ENCODE measurements at regions of chr2 and their contacts with region 1.

Region 1: GRCh38 chr2:177263451-177264208 is 897 bp downstream of the NFE2L2 start:
- DNase-seq: peak; percentile 99
- H3K4me3 ChIP-seq: peak overlapping the region; percentile 70 to 99
- H3K27ac ChIP-seq: peak overlapping the region; percentile 99 to 100
- H3K4me1 ChIP-seq: peaks cover 0 to 53% (median 30%) of the 10 kb centered on the region in 4 donors
- H3K27me3 ChIP-seq: no peaks in the 10 kb centered on the region
- CTCF ChIP-seq: peak; percentile 89 to 91

Region 2: DNA sequence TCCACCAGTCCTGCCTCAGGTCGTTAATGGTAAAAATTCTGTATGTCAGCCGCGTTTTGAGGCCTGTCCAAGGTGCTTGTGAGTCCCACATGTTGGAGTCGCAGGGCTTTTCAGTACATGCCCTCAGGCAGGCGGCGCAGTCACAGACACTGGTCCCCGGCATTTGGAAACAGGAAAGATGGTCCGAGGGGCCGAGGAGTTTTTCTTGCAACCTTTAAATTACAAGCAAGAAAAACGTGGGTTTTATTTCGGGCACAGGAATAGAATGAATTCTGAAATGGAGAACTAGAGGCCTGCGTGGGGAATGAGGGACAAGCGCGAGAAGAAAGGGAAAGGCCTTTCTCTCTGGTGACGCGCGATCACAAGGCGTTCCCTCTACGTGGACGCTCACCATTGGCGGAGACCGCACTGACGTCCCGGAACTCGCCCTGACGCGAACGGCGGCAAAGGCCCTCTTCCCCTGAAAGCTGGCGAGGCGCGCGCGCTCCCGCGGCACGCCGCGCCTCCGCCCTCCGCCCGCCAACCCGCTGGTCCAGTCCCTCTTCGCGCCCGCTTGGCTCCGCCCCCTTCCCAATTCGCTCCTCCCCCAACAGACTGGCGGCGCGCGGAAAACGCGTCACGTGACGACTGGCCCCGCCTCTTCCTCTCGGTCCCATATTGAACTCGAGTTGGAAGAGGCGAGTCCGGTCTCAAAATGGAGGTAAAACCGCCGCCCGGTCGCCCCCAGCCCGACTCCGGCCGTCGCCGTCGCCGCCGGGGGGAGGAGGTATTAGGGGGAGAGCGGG is 51.3 kb before region 1 on chr2 and contains the start of gene HNRNPA3:
- intact Hi-C with region 1: loop called (anchors 2 kb)
- DNase-seq: peak; percentile 98 to 100
- H3K4me3 ChIP-seq: peak within 1 kb of the TSS; percentile 76 to 90
- H3K27ac ChIP-seq: peak within 1 kb of the TSS; percentile 97 to 98
- H3K4me1 ChIP-seq: peaks cover 0 to 45% (median 32%) of the 10 kb centered on the region in 4 donors
- H3K27me3 ChIP-seq: no peaks in the 10 kb centered on the region
- CTCF ChIP-seq: peak in 1 of 2 experiments; percentile 24

Region 3: GRCh38 chr2:177717831-177718618 is 454.4 kb after region 1 on chr2:
- intact Hi-C with region 1: no loop called
- DNase-seq: no peak
- H3K4me3 ChIP-seq: no peak overlapping the region
- H3K27ac ChIP-seq: no peak overlapping the region
- H3K4me1 ChIP-seq: no peaks in the 10 kb centered on the region
- H3K27me3 ChIP-seq: no peaks in the 10 kb centered on the region
- CTCF ChIP-seq: no peak

Measured in tibial artery (tissue), 4 donors.